ENCODE measurements at regions of chr19 and their contacts with region 1.

Region 1: GRCh38 chr19:15379083-15379995 is at the start of gene AKAP8:
- DNase-seq: peak; percentile 96
- ATAC-seq: peak; percentile 88
- H3K4me3 ChIP-seq: peak within 1 kb of the TSS; percentile 84 to 98 (median 91)
- H3K27ac ChIP-seq: peak within 1 kb of the TSS; percentile 95
- H3K4me1 ChIP-seq: peaks cover 48% of the 10 kb centered on the region
- H3K27me3 ChIP-seq: no peaks in the 10 kb centered on the region; a peak in 1 of 5 replicates
- CTCF ChIP-seq: no peak
- EP300 ChIP-seq: peak in 1 of 2 experiments; percentile 4; a peak in 1 of 4 replicates
- POLR2A ChIP-seq: peak; percentile 80 to 85
- RAD21 ChIP-seq: peak; percentile 10; the same call in 1 of the 2 replicates
- total RNA-seq, gene AKAP8: 21.2 and 22.1 TPM in 2 replicates

Region 2: DNA sequence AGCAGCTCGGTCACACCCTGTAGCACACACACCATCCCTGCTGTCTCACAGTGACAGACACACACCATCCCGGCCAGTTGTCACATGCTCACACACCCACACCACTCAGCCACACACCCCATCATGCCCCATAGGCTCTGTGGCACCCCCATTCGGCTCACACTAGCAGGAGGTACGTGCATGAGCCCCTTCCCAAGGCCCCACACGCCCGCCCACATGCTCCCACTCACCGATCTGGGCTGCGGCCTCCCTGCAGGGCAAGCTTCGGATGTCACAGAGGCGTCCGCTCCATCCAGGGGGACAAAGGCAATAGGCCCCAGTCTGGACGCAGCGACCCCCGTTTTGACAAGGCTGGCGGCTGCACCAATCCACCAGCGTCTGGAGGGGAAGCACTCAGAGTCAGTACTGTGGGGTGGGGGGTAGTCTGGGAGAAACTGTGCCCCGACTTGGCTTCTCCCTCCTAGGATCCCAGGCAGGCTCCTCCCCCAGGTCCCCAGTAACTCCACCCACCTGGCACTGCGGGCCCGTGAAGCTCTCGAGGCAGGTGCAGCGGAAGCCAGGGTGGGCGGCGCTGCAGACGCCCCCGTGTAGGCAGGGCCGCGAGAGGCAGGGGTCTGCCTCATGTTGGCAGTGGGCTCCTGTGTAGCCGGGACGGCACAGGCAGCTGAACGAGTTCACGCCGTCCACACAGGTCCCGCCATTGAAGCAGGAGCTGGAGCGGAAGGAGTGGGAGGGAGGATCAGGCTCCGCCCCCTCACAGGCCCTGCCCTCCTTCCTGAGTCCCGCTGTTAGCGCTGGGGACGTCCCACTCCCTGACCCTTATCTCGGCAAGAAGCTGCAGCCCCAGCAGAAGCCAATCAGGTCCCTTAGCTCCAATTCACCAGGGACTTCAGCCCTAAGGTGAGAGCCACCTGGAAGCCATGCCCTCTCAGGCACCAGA is 198.6 kb before region 1 on chr19:
- CTCF ChIA-PET with region 1: no interaction called
- POLR2A ChIA-PET with region 1: no interaction called
- in situ Hi-C with region 1: no loop called
- intact Hi-C with region 1: no loop called
- DNase-seq: peak; percentile 37
- ATAC-seq: peak; percentile 80
- H3K4me3 ChIP-seq: peak overlapping the region; percentile 60 to 86 (median 78); a peak in 5 of 6 replicates
- H3K27ac ChIP-seq: no peak overlapping the region
- H3K4me1 ChIP-seq: peaks cover 23% of the 10 kb centered on the region
- H3K27me3 ChIP-seq: peaks cover 0 to 5% of the 10 kb centered on the region in 2 experiments; a peak in 1 of 5 replicates
- CTCF ChIP-seq: peak; percentile 32
- EP300 ChIP-seq: no peak
- POLR2A ChIP-seq: peak in 1 of 2 experiments; percentile 64; a peak in 1 of 4 replicates
- RAD21 ChIP-seq: no peak

Region 3: DNA sequence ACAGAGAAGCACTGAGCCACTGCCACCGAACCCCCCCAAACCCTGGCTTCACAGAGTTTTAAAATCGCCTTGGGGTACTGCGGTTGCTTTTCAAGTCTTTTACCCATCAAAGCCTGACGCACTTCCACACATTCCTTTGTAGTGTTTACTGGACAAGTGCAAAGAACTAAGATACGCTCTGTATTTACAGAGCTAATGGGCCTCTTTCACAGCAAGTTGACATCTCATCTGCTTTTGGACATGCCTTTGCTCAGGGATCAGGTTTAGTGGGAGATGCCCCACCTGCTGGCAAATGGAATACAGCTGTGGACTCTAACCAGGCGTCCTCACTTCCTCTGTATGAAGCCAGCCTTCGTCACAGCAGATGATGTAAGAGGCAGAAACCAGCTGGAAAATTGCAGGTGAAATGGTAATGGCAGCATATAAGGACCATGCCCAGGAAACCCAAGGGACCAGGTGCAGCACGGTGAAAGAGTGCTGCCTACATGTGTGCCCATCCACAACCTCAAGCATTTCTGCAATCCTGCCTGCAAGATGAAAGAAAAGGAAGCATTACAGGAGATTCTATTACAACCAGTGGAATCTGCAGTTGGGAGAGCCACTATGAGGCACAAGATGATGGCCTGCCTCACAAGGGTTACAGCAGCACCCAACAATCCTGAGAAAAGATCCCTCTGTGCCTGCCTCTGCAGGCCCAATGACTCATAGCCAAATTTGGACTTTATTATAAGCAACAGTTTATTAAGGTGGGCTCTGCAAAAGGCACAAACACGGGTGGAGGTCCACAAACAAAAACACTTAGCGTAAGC is 81.7 kb before region 1 on chr19:
- CTCF ChIA-PET with region 1: no interaction called
- POLR2A ChIA-PET with region 1: interaction called, 13 read pairs
- in situ Hi-C with region 1: no loop called
- intact Hi-C with region 1: no loop called
- DNase-seq: peak; percentile 99
- ATAC-seq: peak; percentile 87
- H3K4me3 ChIP-seq: peak overlapping the region in 1 of 3 experiments; percentile 58; a peak in 2 of 6 replicates
- H3K27ac ChIP-seq: peak overlapping the region; percentile 97
- H3K4me1 ChIP-seq: peaks cover 100% of the 10 kb centered on the region
- H3K27me3 ChIP-seq: no peaks in the 10 kb centered on the region
- CTCF ChIP-seq: peak; percentile 82
- EP300 ChIP-seq: peak; percentile 82 to 97; a peak in 3 of 4 replicates
- POLR2A ChIP-seq: no peak
- RAD21 ChIP-seq: peak; percentile 72

Region 4: DNA sequence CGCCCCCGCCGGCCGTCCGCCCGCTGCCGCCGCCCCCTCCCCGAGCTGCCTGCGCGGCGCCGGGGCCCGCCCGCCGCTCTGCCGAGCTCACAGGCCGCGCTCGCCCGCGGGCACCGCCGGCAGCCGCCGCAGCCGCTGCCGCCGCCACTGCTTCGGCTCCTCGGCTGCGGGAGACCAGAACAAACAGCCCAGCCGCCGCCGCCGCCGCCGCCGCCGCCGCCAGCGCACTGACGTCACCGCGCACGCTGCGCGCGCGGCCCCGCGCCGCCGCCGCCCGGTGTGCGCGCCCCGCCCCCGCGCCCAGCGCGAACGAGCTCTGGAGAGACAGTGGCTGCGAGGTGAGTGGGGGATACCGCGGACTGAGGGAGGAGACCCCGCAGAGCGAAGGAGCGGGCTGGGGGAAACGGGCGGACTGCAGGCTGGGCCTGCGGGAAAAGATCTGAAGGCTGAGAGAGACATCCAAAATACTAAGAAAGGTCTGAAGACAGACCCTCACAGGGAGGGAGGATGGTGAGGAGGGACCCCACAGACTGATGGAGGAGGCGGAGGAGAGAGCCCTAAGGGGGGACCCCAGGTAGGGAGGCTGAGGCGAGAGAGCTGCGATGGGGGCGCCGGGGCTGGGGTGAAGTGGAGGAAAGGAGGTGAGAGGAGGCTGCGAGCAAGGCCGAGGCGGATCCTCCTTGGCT is 46.9 kb before region 1 on chr19 and contains the start of gene BRD4:
- CTCF ChIA-PET with region 1: no interaction called
- POLR2A ChIA-PET with region 1: interaction called, 20 read pairs
- in situ Hi-C with region 1: no loop called
- intact Hi-C with region 1: no loop called
- DNase-seq: no peak
- ATAC-seq: peak; percentile 66
- H3K4me3 ChIP-seq: peak within 1 kb of the TSS; percentile 86 to 99 (median 99)
- H3K27ac ChIP-seq: peak within 1 kb of the TSS; percentile 76
- H3K4me1 ChIP-seq: peaks cover 44% of the 10 kb centered on the region
- H3K27me3 ChIP-seq: no peaks in the 10 kb centered on the region; a peak in 1 of 5 replicates
- CTCF ChIP-seq: no peak
- EP300 ChIP-seq: no peak
- POLR2A ChIP-seq: peak in 1 of 2 experiments; percentile 63; a peak in 2 of 4 replicates
- RAD21 ChIP-seq: no peak
- total RNA-seq, gene BRD4: 11.4 TPM in 2 replicates

Region 5: GRCh38 chr19:15412832-15413231 is 33.5 kb after region 1 on chr19:
- CTCF ChIA-PET with region 1: no interaction called
- POLR2A ChIA-PET with region 1: interaction called, 67 read pairs
- in situ Hi-C with region 1: no loop called
- intact Hi-C with region 1: loop called (anchors 5 kb)
- DNase-seq: no peak
- ATAC-seq: no peak
- H3K4me3 ChIP-seq: no peak overlapping the region
- H3K27ac ChIP-seq: peak overlapping the region; percentile 32
- H3K4me1 ChIP-seq: peaks cover 73% of the 10 kb centered on the region
- H3K27me3 ChIP-seq: no peaks in the 10 kb centered on the region; a peak in 2 of 5 replicates
- CTCF ChIP-seq: no peak
- EP300 ChIP-seq: no peak
- POLR2A ChIP-seq: no peak
- RAD21 ChIP-seq: no peak